CD4-positive, alpha-beta T cell (primary cell): ENCODE measurements at regions of chrX and their contacts with region 1.

Region 1: DNA sequence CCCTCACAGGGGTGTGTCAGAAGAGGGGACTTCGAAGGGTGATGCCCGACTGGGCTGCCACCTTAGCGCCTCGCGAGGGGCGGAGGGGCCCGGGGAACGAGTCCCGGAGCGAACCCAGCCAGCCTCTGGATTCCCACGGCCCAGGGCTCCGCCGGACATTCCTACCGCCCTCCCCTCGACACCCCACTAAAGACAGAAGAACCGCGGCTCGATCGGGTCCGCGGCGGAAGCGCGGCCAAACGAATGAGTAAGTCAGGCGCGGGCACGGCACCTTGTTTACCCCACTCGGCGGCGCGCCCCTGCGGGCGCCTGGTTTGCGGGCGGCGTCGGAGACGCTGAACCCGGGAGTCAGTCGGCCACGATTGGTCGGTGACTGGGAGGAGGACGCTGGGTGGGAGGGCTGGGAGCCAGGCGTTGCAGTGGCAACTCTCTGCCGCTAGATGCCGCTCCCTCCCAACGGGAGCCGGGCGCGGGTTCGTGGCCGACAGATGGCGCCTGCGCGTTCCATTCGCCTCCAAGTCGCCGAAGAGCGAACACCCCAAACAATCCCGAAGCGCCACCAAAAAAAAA is 1.4 kb upstream of the STAG2 start:
- DNase-seq: peak; percentile 83 to 95 (median 88)
- ATAC-seq: peak; percentile 64
- H3K4me3 ChIP-seq: peak overlapping the region; percentile 97
- H3K4me3 Mint-ChIP-seq: peak overlapping the region; percentile 98
- H3K27ac ChIP-seq: peak overlapping the region; percentile 93 to 99
- H3K27ac Mint-ChIP-seq: peak overlapping the region; percentile 93
- H3K4me1 ChIP-seq: peaks cover 7% of the 10 kb centered on the region
- H3K4me1 Mint-ChIP-seq: peaks cover 16% of the 10 kb centered on the region
- H3K27me3 ChIP-seq: no peaks in the 10 kb centered on the region
- H3K27me3 Mint-ChIP-seq: peaks cover 7% of the 10 kb centered on the region
- CTCF ChIP-seq: peak; percentile 73

Region 2: GRCh38 chrX:123833387-123833786 is 126.7 kb before region 1 on chrX:
- CTCF ChIA-PET with region 1: interaction called, 5 read pairs
- POLR2A ChIA-PET with region 1: interaction called, 4 read pairs
- intact Hi-C with region 1: loop called (anchors 5 to 10 kb)
- DNase-seq: peak; percentile 22 to 76 (median 46)
- ATAC-seq: peak; percentile 94
- H3K4me3 ChIP-seq: no peak overlapping the region
- H3K4me3 Mint-ChIP-seq: no peak overlapping the region
- H3K27ac ChIP-seq: no peak overlapping the region
- H3K27ac Mint-ChIP-seq: no peak overlapping the region
- H3K4me1 ChIP-seq: no peaks in the 10 kb centered on the region
- H3K4me1 Mint-ChIP-seq: no peaks in the 10 kb centered on the region
- H3K27me3 ChIP-seq: no peaks in the 10 kb centered on the region
- H3K27me3 Mint-ChIP-seq: peaks cover 3% of the 10 kb centered on the region
- CTCF ChIP-seq: peak; percentile 61

Region 3: GRCh38 chrX:123884809-123885408 is 75.2 kb before region 1 on chrX:
- CTCF ChIA-PET with region 1: no interaction called
- POLR2A ChIA-PET with region 1: no interaction called
- intact Hi-C with region 1: no loop called
- DNase-seq: peak in 7 of 14 experiments; percentile 2 to 72 (median 43)
- ATAC-seq: peak; percentile 73
- H3K4me3 ChIP-seq: no peak overlapping the region
- H3K4me3 Mint-ChIP-seq: no peak overlapping the region
- H3K27ac ChIP-seq: no peak overlapping the region
- H3K27ac Mint-ChIP-seq: peak overlapping the region; percentile 36
- H3K4me1 ChIP-seq: no peaks in the 10 kb centered on the region
- H3K4me1 Mint-ChIP-seq: peaks cover 12% of the 10 kb centered on the region
- H3K27me3 ChIP-seq: no peaks in the 10 kb centered on the region
- H3K27me3 Mint-ChIP-seq: no peaks in the 10 kb centered on the region
- CTCF ChIP-seq: peak; percentile 68

Region 4: DNA sequence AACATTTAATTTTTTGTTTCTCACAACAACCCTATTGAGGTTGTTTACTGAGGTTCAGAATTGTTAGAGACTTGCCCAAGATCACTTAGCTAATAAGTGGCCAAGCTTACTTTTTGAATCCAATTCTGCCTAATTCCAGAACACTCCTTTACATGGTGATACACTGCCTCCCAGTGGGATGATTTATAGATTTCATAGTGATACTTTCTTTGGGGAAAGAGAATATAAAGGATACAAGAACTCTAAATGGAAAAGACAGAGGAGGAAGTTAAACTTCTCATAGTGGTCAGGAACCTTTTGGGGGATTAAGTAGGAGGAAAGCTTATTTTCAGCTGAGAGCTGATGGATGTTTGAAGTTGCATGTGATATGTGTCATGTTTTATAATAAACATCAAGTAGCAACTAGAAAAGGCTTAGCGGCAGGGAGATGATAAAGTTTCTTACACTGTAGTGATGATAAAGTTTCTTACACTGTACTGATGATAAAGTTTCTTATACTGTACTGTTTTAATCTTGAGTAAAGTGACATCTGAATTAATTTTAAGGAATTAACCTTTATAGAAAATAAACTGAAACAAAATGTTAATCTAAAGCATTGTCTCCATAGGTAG is 16.7 kb after region 1 on chrX:
- CTCF ChIA-PET with region 1: interaction called, 12 read pairs
- POLR2A ChIA-PET with region 1: interaction called, 7 read pairs
- intact Hi-C with region 1: loop called in 1 of 2 experiments (anchors 2 kb)
- DNase-seq: peak in 3 of 14 experiments; percentile 30 to 49 (median 47)
- ATAC-seq: peak; percentile 70
- H3K4me3 ChIP-seq: no peak overlapping the region
- H3K4me3 Mint-ChIP-seq: peak overlapping the region; percentile 37
- H3K27ac ChIP-seq: no peak overlapping the region
- H3K27ac Mint-ChIP-seq: peak overlapping the region; percentile 62
- H3K4me1 ChIP-seq: peaks cover 17% of the 10 kb centered on the region
- H3K4me1 Mint-ChIP-seq: peaks cover 65% of the 10 kb centered on the region
- H3K27me3 ChIP-seq: no peaks in the 10 kb centered on the region
- H3K27me3 Mint-ChIP-seq: no peaks in the 10 kb centered on the region
- CTCF ChIP-seq: no peak

Region 5: GRCh38 chrX:124086411-124086810 is 126.3 kb after region 1 on chrX:
- CTCF ChIA-PET with region 1: no interaction called
- POLR2A ChIA-PET with region 1: interaction called, 7 read pairs
- intact Hi-C with region 1: loop called in 1 of 2 experiments (anchors 2 kb)
- DNase-seq: peak in 11 of 14 experiments; percentile 4 to 84 (median 27)
- ATAC-seq: peak; percentile 95
- H3K4me3 ChIP-seq: no peak overlapping the region
- H3K4me3 Mint-ChIP-seq: peak overlapping the region; percentile 77
- H3K27ac ChIP-seq: no peak overlapping the region
- H3K27ac Mint-ChIP-seq: peak overlapping the region; percentile 92
- H3K4me1 ChIP-seq: peaks cover 3% of the 10 kb centered on the region
- H3K4me1 Mint-ChIP-seq: peaks cover 36% of the 10 kb centered on the region
- H3K27me3 ChIP-seq: no peaks in the 10 kb centered on the region
- H3K27me3 Mint-ChIP-seq: no peaks in the 10 kb centered on the region
- CTCF ChIP-seq: no peak

Region 6: DNA sequence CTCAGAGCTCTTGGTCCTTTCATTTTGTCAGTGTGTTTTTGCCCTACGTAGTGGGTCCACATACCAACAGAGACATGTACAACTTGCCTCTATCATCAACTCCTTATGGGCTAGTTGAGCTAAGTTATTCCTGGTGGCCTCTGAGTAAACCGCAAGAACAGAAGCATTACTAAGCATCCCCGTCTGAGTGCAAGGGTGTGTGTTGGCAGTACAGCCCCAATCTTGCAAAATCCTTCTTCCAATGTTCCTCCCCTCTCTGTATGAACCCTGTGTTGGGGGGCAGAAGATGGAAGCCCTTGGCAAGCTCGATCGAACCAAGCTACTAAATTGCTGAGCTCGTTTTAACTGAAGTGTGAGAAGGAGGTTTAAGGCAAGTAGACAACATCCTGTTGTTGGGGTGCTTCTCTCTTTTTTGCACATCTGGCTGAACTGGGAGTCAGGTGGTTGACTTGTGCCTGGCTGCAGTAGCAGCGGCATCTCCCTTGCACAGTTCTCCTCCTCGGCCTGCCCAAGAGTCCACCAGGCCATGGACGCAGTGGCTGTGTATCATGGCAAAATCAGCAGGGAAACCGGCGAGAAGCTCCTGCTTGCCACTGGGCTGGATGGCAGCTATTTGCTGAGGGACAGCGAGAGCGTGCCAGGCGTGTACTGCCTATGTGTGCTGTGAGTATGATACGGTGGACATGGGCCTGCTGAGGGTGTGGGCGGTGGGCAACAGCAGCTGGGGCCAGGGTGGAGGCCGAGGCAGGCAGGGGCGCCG is 386.2 kb after region 1 on chrX and contains the start of gene SH2D1A:
- CTCF ChIA-PET with region 1: interaction called, 4 read pairs
- POLR2A ChIA-PET with region 1: interaction called, 4 read pairs
- intact Hi-C with region 1: loop called in 1 of 2 experiments (anchors 10 kb)
- DNase-seq: peak in 10 of 14 experiments; percentile 3 to 79 (median 33)
- ATAC-seq: peak; percentile 47
- H3K4me3 ChIP-seq: peak within 1 kb of the TSS; percentile 78
- H3K4me3 Mint-ChIP-seq: peak within 1 kb of the TSS; percentile 99
- H3K27ac ChIP-seq: peak within 1 kb of the TSS; percentile 69 to 75
- H3K27ac Mint-ChIP-seq: peak within 1 kb of the TSS; percentile 98
- H3K4me1 ChIP-seq: peaks cover 27% of the 10 kb centered on the region
- H3K4me1 Mint-ChIP-seq: peaks cover 52% of the 10 kb centered on the region
- H3K27me3 ChIP-seq: no peaks in the 10 kb centered on the region
- H3K27me3 Mint-ChIP-seq: no peaks in the 10 kb centered on the region
- CTCF ChIP-seq: no peak
- total RNA-seq, gene SH2D1A: 39.6 to 41.5 TPM